ENCODE measurements at regions of chr11 and their contacts with region 1.

Region 1: DNA sequence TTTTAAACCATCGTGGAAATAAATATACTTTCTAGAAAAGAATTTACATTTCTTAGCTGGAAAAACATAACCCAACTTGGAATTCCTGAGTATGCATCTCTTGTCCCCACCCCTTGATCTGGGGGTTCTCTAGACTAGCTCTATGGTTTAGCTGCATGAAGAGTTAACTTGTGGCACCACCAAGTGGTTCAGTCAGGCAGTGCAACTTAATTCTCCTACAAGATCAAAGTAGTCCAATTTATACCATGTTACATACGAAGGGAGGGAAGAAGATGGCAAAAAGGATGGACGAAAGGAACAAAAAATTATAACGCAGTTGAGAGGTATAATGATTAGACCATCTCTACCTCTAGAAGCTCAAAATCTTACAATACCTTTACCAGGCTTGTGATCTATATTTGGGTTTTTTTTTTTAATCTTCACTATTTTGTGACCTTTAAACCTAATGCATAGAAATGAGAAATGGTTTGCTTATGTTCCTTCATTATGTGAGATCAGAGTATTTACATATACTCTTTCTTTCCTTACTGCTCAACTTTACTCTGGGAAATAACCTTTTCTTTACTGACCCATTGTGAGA is 28.5 kb upstream of the ALKBH3 start:
- DNase-seq: peak; percentile 78
- H3K4me3 ChIP-seq: no peak overlapping the region
- H3K27ac ChIP-seq: no peak overlapping the region
- H3K4me1 ChIP-seq: no peaks in the 10 kb centered on the region
- H3K27me3 ChIP-seq: no peaks in the 10 kb centered on the region
- CTCF ChIP-seq: peak; percentile 59 to 73
- POLR2A ChIP-seq: no peak

Region 2: DNA sequence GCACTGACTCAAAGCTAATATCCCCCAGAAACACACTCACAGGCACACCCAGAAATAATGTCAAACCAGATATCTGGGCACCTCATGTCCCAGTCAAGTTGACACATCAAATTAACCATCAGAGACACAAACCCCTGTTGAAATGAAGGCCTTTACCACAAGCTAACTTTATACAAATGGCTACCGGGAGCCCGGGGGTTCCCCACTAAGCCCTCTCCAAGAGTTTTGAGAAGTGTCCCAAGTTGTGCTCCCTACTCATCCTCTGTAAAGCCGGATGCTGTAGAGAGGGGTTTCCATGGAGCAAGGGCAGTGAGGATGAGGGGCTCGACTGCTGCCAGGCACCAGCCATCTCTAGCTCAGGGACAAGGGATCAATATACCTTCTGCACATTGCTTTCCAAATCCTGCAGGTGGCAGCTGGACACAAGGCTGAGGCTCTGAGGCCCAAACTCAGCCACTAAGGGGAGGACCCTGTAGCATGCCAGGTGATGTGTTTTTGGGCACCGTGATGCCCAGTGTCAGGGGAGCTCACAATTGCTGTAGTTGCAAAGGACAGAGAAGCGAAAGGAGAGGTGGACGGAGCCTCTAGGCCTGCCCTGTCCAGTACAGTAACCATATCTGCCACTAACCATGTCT is 347.7 kb before region 1 on chr11:
- CTCF ChIA-PET with region 1: interaction called, 28 read pairs
- POLR2A ChIA-PET with region 1: no interaction called
- dilution Hi-C with region 1: no loop called
- intact Hi-C with region 1: no loop called
- DNase-seq: no peak
- H3K4me3 ChIP-seq: no peak overlapping the region
- H3K27ac ChIP-seq: no peak overlapping the region
- H3K4me1 ChIP-seq: no peaks in the 10 kb centered on the region
- H3K27me3 ChIP-seq: peaks cover 5 to 7% of the 10 kb centered on the region in 2 experiments
- CTCF ChIP-seq: peak in 1 of 2 donors; percentile 19
- POLR2A ChIP-seq: no peak

Region 3: GRCh38 chr11:43567396-43567975 is 284.7 kb before region 1 on chr11:
- CTCF ChIA-PET with region 1: interaction called, 34 read pairs
- POLR2A ChIA-PET with region 1: no interaction called
- dilution Hi-C with region 1: no loop called
- intact Hi-C with region 1: no loop called
- DNase-seq: peak; percentile 49
- H3K4me3 ChIP-seq: no peak overlapping the region
- H3K27ac ChIP-seq: no peak overlapping the region
- H3K4me1 ChIP-seq: no peaks in the 10 kb centered on the region
- H3K27me3 ChIP-seq: peaks cover 18 to 19% of the 10 kb centered on the region in 2 experiments
- CTCF ChIP-seq: peak; percentile 58 to 77
- POLR2A ChIP-seq: no peak

Region 4: DNA sequence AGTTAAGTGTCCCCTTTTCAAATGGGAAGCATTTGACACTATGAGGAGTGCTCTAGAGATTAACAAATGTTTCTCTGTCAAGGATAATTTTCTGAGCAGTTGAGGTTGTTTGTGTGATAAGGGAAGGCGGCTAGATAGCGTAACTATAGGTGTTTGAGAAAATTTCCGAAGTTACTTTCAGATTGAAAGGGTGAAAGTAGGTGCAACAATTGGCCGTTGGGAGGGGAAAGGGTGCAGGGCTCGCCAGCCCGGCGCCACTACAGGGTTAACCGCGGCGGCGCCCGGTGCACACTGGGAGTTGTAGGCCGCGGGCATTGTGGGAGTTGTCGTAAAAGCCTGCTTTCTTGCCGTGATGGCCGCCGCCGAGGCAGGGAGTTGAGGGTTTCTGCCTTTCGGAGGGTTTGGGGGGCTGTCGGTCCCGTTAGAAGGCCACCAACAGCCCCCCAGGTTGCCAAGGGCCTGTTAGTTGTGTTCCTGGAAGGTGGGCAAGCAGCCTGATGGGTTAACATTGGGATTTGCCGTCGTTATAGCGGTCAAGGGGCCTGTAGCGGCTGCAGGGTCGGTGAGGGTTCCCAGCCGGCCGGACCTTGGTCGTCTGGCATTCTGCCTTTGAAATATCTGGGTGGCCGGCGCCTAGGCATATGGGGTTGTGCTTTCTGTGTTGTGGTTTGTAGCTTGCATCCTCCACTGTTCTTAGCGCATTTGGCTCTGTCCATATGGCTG is 208.1 kb before region 1 on chr11:
- CTCF ChIA-PET with region 1: no interaction called
- POLR2A ChIA-PET with region 1: no interaction called
- dilution Hi-C with region 1: no loop called
- intact Hi-C with region 1: loop called (anchors 2 kb)
- DNase-seq: peak; percentile 84
- H3K4me3 ChIP-seq: peak overlapping the region; percentile 39 to 92 (median 89)
- H3K27ac ChIP-seq: peak overlapping the region; percentile 47
- H3K4me1 ChIP-seq: peaks cover 13% of the 10 kb centered on the region
- H3K27me3 ChIP-seq: peaks cover 7 to 13% of the 10 kb centered on the region in 2 experiments
- CTCF ChIP-seq: no peak
- POLR2A ChIP-seq: peak; percentile 83

Region 5: DNA sequence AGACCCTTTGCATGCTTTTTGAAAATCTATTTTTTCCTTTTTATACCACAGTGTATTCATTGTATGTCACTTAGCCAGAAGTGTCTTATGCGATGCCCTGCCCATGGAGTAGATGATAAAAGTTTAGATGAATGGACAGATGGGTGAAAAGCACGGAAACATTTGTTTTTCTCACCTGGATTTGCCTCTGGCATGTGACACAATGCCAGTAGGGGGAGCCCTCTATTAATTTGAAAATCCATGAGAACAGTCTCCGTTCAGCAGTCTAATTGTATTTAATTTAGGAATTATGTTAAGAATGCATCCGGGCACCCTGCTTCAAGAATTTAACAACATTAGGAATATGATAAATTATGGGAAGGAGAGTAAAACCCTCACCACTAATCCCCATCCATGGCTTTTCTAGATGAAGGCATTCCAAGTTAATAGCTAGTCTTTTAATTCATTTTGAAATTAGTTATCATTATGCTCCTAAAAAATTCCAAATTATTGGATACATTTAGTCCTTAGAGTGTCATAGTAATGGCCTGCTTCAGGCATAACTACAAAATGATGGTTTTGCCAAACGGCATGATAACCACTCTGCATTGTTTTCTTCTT is 26.8 kb before region 1 on chr11:
- CTCF ChIA-PET with region 1: interaction called, 85 read pairs
- POLR2A ChIA-PET with region 1: no interaction called
- dilution Hi-C with region 1: no loop called
- intact Hi-C with region 1: loop called (anchors 1 kb)
- DNase-seq: peak; percentile 45
- H3K4me3 ChIP-seq: no peak overlapping the region
- H3K27ac ChIP-seq: no peak overlapping the region
- H3K4me1 ChIP-seq: peaks cover 3% of the 10 kb centered on the region
- H3K27me3 ChIP-seq: no peaks in the 10 kb centered on the region
- CTCF ChIP-seq: peak; percentile 54 to 61
- POLR2A ChIP-seq: no peak

Region 6: GRCh38 chr11:43866520-43866919 is 14.4 kb after region 1 on chr11:
- CTCF ChIA-PET with region 1: interaction called, 12 read pairs
- POLR2A ChIA-PET with region 1: no interaction called
- dilution Hi-C with region 1: no loop called
- intact Hi-C with region 1: no loop called
- DNase-seq: peak; percentile 18
- H3K4me3 ChIP-seq: no peak overlapping the region
- H3K27ac ChIP-seq: no peak overlapping the region
- H3K4me1 ChIP-seq: peaks cover 2% of the 10 kb centered on the region
- H3K27me3 ChIP-seq: peaks cover 8 to 12% of the 10 kb centered on the region in 2 experiments
- CTCF ChIP-seq: no peak
- POLR2A ChIP-seq: no peak